Left cardiac atrium (tissue), 4 donors: ENCODE measurements at regions of chr15 and their contacts with region 1.

Region 1: DNA sequence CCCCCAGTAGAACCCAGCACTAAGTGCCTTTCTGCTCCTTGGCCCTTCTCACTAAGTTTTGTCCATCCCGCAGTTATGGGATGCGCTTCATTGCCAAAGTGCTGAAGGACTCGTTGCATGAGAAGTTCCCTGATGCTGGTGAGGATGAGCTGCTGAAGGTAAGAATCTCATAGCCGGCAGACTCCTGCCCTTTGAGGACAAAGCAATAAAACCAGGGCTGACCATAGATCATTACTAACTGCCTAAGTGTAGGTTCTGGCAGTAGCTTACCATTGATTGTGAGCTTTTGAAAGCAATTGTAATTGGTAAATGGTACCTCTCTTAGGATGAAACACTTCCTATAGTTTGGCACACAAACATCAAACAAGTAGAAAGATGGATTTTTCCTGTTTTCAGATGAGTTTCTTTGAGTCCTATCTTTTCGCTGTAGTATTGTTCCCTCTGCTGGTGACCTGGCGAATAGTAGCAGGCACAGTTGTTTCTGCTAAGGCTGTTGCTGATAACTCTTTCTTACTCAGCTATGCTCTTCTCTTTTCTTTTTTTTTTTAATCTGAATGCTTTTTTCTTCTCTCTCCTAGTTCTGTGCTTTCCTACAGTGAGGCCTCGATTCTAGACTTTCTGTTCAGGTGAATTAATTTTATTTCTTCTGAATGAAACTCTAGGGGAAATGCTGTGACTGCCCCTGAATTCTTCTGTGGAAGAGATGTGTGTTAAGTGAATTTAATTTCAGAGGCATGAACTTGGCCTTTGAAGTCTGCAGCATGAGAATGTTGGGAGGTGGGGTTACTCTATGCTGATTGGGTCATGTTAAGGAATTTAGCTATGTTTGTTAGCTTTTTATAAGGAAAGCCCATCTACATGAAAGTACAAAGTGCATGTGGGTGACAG is 47.4 kb upstream of the CRTC3 start:
- DNase-seq: no peak
- ATAC-seq: peak; percentile 58 to 61

Region 2: DNA sequence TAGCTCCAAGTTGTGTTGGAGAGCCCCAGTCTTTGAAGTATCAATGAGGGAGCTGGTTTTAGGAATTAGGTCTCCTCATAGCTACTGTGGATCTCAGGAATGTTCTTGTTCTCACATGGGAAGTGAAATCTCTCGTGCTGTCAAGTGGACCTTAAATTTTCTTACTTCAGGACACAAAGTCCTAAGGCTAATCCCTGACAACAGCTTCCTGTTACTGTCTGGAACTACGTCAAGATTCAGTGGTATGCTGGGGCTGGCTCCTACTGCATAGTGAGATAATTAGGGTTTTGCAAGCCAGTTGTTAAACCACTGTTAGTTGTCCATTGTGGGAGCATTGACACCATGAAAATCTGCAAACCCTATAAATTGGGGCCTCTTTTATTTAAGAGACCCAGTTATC is 754.1 kb before region 1 on chr15:
- intact Hi-C with region 1: no loop called
- DNase-seq: no peak
- ATAC-seq: peak; percentile 71 to 87

Region 3: DNA sequence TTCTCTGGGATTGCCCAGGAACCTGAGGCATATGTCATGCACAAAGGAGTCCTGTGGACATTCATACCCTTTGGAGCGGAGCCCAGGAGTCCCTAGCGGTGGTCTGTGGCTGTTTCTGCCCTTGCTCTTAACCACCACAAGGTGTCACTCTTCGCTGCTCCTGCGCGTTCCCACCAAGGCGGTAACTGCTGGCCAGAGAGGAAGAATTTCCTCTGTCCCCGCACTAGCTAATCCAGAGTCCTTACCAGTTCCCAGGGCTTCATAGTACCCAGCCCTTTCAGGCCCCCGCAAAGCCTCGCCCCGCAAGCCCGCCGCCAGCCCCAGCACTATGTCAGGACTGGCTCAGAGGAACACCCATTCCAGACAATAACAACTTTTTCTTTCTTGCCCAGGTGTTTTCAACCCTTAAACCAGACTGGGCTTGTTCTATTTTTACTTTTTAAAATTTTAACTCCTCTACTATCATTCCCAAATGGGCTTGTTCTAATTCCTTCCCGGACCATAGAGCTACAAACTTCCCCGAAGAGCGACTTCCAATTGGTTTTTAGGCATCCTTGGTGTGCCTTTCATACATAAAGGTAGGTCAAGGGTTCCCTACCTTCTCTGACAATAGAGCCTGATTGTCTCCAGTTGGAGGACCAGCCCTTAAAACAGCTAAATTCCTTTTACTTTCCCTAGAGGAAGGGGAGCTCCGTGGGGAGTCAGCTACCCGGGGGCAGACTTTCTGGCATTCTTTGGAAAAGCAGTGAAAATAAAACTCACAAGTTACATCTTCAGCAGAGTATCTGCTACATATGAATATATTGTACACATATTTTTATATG is 162.1 kb before region 1 on chr15:
- intact Hi-C with region 1: loop called (anchors 1 to 5 kb)
- DNase-seq: peak; percentile 87
- ATAC-seq: peak; percentile 85 to 89

Region 4: DNA sequence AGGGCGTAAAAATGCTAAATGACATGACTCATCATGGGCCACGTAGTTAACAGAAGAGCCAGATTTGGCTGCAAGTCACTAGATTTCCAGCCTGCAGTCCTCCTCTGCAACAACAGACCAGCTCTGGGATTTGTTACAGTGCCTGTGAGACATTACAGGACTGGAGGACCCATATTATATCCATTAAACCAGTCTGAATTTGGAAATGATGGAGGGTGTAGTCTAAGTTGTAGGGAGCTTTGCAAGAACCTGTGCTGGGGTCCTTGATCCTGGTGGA is 119.5 kb before region 1 on chr15:
- intact Hi-C with region 1: loop called (anchors 5 to 10 kb)
- DNase-seq: no peak
- ATAC-seq: peak; percentile 56 to 82